AG04449 (cell line): ENCODE measurements at regions of chr16 and their contacts with region 1.

Region 1: DNA sequence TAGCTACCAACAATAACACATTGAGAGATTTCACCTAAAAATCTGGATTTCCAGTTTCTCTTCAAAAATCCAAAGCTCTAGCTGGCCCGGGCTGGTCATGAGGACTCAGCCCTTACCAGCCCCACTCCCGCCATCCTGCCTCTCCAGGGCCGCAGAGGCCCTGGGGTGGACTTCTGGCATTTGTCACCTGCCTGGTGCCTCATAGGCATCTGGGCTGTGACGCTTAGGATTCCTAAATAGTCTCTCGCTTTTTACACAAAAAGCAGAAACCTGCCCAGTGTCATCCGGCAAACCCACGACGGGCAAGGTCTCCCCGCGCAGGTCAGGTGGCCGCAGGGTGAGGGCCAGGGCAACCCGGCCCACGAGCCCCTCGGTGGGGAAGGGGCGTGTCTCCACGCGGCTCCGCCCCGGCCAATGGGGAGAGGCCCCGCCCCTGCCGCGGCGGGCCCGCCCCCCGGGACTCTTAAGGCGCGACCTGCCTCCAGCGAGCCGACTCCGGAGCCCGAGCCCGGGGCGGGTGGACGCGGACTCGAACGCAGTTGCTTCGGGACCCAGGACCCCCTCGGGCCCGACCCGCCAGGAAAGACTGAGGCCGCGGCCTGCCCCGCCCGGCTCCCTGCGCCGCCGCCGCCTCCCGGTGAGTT is at the start of gene VASN:
- DNase-seq: no peak
- H3K4me3 ChIP-seq: peak within 1 kb of the TSS; percentile 93
- CTCF ChIP-seq: no peak

Region 2: GRCh38 chr16:4220358-4220757 is 151.1 kb before region 1 on chr16:
- CTCF ChIA-PET with region 1: no interaction called
- POLR2A ChIA-PET with region 1: no interaction called
- DNase-seq: no peak
- H3K4me3 ChIP-seq: no peak overlapping the region
- CTCF ChIP-seq: no peak

Region 3: DNA sequence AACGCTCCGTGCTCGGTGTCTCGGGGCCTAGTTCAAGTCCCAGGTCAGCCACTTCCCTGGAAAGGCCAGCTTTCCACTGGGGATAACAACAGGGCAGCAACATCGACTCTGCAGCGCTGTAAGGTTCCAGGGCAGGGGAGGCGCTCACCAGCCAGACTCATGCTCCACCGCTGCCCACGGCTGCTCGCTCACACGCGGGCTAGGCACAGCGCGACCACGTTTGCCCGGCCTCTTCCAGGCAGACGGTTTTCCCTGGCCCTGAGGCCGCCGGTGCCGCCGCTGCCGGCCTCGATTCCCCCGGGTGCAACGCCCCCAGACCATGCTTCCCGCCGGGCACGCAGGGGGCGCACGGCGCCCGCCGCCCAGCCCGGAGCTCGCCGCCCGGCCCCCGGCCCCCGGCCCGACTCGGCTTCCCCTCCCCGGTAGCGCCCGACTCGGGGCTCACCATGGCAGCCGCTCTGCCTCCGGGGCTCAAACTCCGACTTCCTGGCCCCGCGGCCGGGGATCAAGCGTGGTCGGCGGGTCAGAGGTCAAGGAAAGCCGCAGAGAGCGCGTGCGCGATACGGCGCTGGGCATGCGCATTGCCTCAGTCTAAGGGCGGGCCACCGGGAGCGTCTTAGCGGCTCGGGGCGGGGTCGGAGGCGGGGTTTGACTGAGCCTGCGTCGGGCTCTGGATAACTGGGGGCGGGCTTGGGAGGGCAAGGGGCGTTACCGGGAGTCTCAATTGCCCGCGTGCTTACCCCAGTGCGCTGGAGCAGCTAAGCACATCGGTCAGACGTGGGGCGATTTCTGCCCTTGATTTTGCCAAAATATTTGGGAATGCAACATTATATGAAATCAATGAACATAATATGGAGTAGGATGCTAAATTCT is 20.5 kb before region 1 on chr16 and contains the start of gene PAM16:
- CTCF ChIA-PET with region 1: interaction called, 4 read pairs
- POLR2A ChIA-PET with region 1: interaction called, 26 read pairs
- DNase-seq: peak; percentile 47
- H3K4me3 ChIP-seq: peak within 1 kb of the TSS; percentile 86
- CTCF ChIP-seq: no peak

Region 4: DNA sequence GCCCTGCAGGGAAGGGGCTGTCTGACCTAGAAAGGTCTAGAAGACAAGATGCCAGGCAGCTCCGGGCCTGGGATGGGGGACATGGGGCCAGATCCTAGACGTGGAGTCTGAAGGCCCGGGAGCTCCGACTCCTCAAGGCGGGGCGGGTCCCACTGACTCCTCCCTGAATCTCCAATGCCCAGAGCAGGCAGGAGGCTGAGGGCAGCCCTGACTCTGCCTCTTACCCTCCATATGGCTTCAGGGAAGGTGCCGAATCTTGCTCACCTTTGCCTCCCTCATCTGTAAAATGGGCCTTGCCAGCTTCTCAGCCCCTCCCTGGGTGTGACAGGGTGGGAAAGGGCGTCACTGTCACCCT is 14.9 kb after region 1 on chr16:
- CTCF ChIA-PET with region 1: interaction called, 17 read pairs
- POLR2A ChIA-PET with region 1: interaction called, 18 read pairs
- DNase-seq: no peak
- H3K4me3 ChIP-seq: no peak overlapping the region
- CTCF ChIP-seq: no peak

Region 5: DNA sequence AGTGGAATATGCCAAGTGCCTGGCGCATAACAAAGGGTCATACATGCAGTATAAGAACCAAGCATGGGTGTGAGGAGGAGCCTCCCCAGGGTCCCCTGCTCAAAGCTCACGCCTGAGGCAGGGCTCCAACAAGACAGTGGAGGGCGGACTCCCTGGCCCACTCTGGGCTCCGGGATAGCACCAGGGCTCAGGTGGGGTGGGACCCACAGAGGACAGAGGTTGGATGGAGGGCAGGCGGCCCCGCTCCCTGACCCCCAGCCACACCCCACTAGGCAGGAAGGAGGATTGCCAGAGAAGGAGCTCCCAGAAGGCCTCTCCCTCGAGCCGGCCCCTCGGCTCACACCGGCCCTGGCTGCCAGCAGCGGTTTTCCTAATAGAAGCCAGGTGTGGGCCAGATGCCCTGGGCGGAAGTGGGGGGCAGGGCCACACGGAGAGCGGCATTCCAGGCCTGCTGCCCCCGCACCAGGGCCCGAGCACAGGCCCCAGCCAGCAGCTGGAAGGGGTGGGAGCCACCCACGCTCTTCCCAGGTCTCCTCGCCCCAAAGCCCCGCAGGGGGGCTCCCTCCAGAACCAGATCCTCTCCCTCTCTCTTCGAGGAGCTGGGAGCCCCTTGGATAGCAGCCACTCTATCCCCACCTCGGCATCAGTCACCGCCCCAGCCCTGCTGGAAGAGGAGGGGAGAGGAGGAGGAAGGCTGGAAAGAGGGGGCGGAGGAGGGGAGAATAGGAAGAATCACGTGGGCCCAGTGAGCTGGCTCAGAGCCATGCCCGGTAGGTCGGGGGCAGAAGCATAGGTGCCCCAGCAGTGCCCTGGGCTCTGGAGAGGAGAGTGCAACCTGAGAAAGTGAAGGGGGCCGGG is 21.1 kb after region 1 on chr16:
- CTCF ChIA-PET with region 1: interaction called, 17 read pairs
- POLR2A ChIA-PET with region 1: interaction called, 28 read pairs
- DNase-seq: no peak
- H3K4me3 ChIP-seq: no peak overlapping the region
- CTCF ChIP-seq: no peak